ENCODE measurements at regions of chr4 and their contacts with region 1.

Region 1: GRCh38 chr4:781493-782216 is 44.3 kb downstream of the CPLX1 start:
- DNase-seq: peak; percentile 98 to 100 (median 99)
- ATAC-seq: peak; percentile 99
- H3K4me3 ChIP-seq: peak overlapping the region; percentile 100
- H3K27ac ChIP-seq: peak overlapping the region; percentile 99
- H3K4me1 ChIP-seq: peaks cover 12 to 49% of the 10 kb centered on the region in 2 experiments; a peak in 4 of 5 replicates
- H3K27me3 ChIP-seq: no peaks in the 10 kb centered on the region
- CTCF ChIP-seq: no peak
- EP300 ChIP-seq: no peak
- POLR2A ChIP-seq: peak; percentile 96
- RAD21 ChIP-seq: no peak; a peak in 1 of 4 replicates

Region 2: GRCh38 chr4:610411-611261 is 171.0 kb before region 1 on chr4:
- CTCF ChIA-PET with region 1: no interaction called
- POLR2A ChIA-PET with region 1: no interaction called
- in situ Hi-C with region 1: no loop called
- intact Hi-C with region 1: no loop called
- DNase-seq: no peak
- ATAC-seq: no peak
- H3K4me3 ChIP-seq: no peak overlapping the region
- H3K27ac ChIP-seq: no peak overlapping the region
- H3K4me1 ChIP-seq: peaks cover 0 to 3% of the 10 kb centered on the region in 2 experiments; a peak in 1 of 5 replicates
- H3K27me3 ChIP-seq: peaks cover 4 to 37% of the 10 kb centered on the region in 2 experiments; a peak in 3 of 5 replicates
- CTCF ChIP-seq: no peak
- EP300 ChIP-seq: no peak
- POLR2A ChIP-seq: no peak
- RAD21 ChIP-seq: no peak

Region 3: GRCh38 chr4:663438-664428 is 117.9 kb before region 1 on chr4:
- CTCF ChIA-PET with region 1: no interaction called
- POLR2A ChIA-PET with region 1: no interaction called
- in situ Hi-C with region 1: no loop called
- intact Hi-C with region 1: no loop called
- DNase-seq: no peak
- ATAC-seq: no peak
- H3K4me3 ChIP-seq: no peak overlapping the region
- H3K27ac ChIP-seq: no peak overlapping the region
- H3K4me1 ChIP-seq: peaks cover 0 to 42% of the 10 kb centered on the region in 2 experiments; a peak in 2 of 5 replicates
- H3K27me3 ChIP-seq: peaks cover 21 to 52% of the 10 kb centered on the region in 2 experiments; a peak in 3 of 5 replicates
- CTCF ChIP-seq: no peak
- EP300 ChIP-seq: no peak
- POLR2A ChIP-seq: no peak
- RAD21 ChIP-seq: no peak

Region 4: GRCh38 chr4:683982-684622 is 97.6 kb before region 1 on chr4:
- CTCF ChIA-PET with region 1: no interaction called
- POLR2A ChIA-PET with region 1: no interaction called
- in situ Hi-C with region 1: no loop called
- intact Hi-C with region 1: loop called (anchors 5 kb)
- DNase-seq: peak; percentile 69 to 83 (median 74)
- ATAC-seq: peak; percentile 68
- H3K4me3 ChIP-seq: no peak overlapping the region
- H3K27ac ChIP-seq: no peak overlapping the region
- H3K4me1 ChIP-seq: peaks cover 25 to 94% of the 10 kb centered on the region in 2 experiments
- H3K27me3 ChIP-seq: no peaks in the 10 kb centered on the region
- CTCF ChIP-seq: peak; percentile 82 to 85 (median 84)
- EP300 ChIP-seq: no peak
- POLR2A ChIP-seq: no peak
- RAD21 ChIP-seq: peak; percentile 8 to 66; a peak in 2 of 4 replicates

Region 5: GRCh38 chr4:762211-763190 is 19.2 kb before region 1 on chr4:
- CTCF ChIA-PET with region 1: no interaction called
- POLR2A ChIA-PET with region 1: interaction called, 17 read pairs
- in situ Hi-C with region 1: no loop called
- intact Hi-C with region 1: no loop called
- DNase-seq: no peak
- ATAC-seq: peak; percentile 19; the same call in 1 of the 3 replicates
- H3K4me3 ChIP-seq: no peak overlapping the region
- H3K27ac ChIP-seq: no peak overlapping the region
- H3K4me1 ChIP-seq: peaks cover 0 to 14% of the 10 kb centered on the region in 2 experiments; a peak in 2 of 5 replicates
- H3K27me3 ChIP-seq: no peaks in the 10 kb centered on the region
- CTCF ChIP-seq: peak in 2 of 3 experiments; percentile 14 to 24; a peak in 2 of 6 replicates
- EP300 ChIP-seq: no peak
- POLR2A ChIP-seq: 0 out of 2 replicates have a peak, but pooled peaks have one; percentile 10
- RAD21 ChIP-seq: no peak

Region 6: GRCh38 chr4:770022-770421 is 11.6 kb before region 1 on chr4:
- CTCF ChIA-PET with region 1: no interaction called
- POLR2A ChIA-PET with region 1: interaction called, 17 read pairs
- in situ Hi-C with region 1: no loop called
- intact Hi-C with region 1: no loop called
- DNase-seq: no peak
- ATAC-seq: no peak
- H3K4me3 ChIP-seq: no peak overlapping the region
- H3K27ac ChIP-seq: no peak overlapping the region
- H3K4me1 ChIP-seq: peaks cover 0 to 28% of the 10 kb centered on the region in 2 experiments; a peak in 3 of 5 replicates
- H3K27me3 ChIP-seq: no peaks in the 10 kb centered on the region
- CTCF ChIP-seq: no peak
- EP300 ChIP-seq: no peak
- POLR2A ChIP-seq: no peak
- RAD21 ChIP-seq: no peak

Region 7: DNA sequence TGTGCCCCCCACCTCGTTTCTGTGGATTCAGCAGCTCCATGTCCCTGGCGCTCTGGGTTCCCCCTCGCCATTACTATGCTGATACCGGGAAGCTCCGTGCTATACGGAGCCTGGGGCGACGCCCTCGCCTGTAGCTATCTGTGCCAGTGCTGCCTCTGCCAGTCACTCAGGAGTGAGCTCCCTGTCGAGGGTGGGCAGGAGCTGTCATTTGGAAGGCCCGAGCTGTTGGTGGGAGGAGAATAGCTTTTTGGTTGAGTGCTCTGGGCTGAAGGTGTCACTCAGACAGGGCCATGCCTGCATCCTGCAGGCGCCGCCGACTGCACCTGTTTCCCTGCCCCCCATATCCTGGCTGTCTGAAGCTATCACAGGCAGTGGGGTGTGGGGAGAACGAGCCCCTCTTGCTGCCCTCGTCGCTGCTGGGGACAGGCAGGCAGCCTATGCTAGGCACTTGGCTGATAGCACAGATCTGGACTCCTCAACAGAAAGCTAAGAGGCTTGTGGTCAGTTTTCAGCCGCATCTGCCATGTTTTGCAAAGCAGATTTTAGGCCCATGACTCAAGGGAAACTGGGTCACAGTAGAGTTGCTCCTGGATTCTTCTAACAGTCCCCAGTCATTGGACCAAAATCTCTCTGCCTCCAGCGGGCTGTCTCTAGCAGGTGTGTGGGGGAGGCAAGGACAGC is 12.4 kb after region 1 on chr4:
- CTCF ChIA-PET with region 1: no interaction called
- POLR2A ChIA-PET with region 1: interaction called, 15 read pairs
- in situ Hi-C with region 1: no loop called
- intact Hi-C with region 1: no loop called
- DNase-seq: no peak
- ATAC-seq: no peak
- H3K4me3 ChIP-seq: no peak overlapping the region
- H3K27ac ChIP-seq: no peak overlapping the region
- H3K4me1 ChIP-seq: peaks cover 0 to 61% of the 10 kb centered on the region in 2 experiments; a peak in 3 of 5 replicates
- H3K27me3 ChIP-seq: peaks cover 15 to 40% of the 10 kb centered on the region in 2 experiments
- CTCF ChIP-seq: no peak
- EP300 ChIP-seq: no peak
- POLR2A ChIP-seq: no peak
- RAD21 ChIP-seq: no peak

Region 8: GRCh38 chr4:915595-915994 is 133.9 kb after region 1 on chr4:
- CTCF ChIA-PET with region 1: no interaction called
- POLR2A ChIA-PET with region 1: no interaction called
- in situ Hi-C with region 1: no loop called
- intact Hi-C with region 1: no loop called
- DNase-seq: no peak
- ATAC-seq: no peak
- H3K4me3 ChIP-seq: no peak overlapping the region
- H3K27ac ChIP-seq: no peak overlapping the region
- H3K4me1 ChIP-seq: peaks cover 0 to 22% of the 10 kb centered on the region in 2 experiments; a peak in 2 of 5 replicates
- H3K27me3 ChIP-seq: no peaks in the 10 kb centered on the region
- CTCF ChIP-seq: no peak
- EP300 ChIP-seq: no peak
- POLR2A ChIP-seq: no peak
- RAD21 ChIP-seq: no peak

Region 9: DNA sequence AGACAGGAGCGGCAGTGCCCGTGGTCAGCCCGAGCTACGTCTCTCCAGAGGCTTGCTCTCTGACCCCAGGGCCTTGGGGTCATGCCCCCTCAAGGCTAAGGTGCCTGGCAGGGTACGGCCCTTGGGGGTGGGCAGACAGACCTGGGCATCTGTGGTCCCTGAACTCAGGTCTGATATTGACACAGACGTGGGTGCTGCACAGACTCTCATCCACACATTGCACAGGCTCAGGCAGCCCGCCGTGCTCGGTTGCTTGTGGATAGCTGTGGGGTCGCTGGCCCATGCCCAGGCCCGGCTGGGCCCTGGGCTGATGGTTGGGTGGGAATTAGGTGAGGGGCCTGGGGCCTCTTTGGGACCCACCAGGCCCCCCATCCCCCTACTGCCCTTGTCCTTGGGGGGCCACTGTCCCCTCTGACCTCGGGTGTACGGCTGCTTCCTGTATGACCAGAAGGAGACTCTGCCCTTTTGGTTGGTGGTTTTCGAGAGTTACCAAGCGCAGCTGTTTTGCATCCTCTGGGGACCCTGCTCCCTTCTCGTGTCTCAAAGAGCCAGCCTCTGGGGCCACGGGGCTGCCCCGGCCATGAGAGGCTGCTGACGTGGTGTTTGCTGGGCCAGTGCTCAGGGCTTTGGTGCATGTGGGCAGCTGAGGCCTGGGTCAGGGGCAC is 239.9 kb after region 1 on chr4:
- CTCF ChIA-PET with region 1: no interaction called
- POLR2A ChIA-PET with region 1: no interaction called
- in situ Hi-C with region 1: no loop called
- intact Hi-C with region 1: no loop called
- DNase-seq: peak in 1 of 4 experiments; percentile 11
- ATAC-seq: no peak
- H3K4me3 ChIP-seq: no peak overlapping the region
- H3K27ac ChIP-seq: no peak overlapping the region
- H3K4me1 ChIP-seq: peaks cover 0 to 63% of the 10 kb centered on the region in 2 experiments; a peak in 3 of 5 replicates
- H3K27me3 ChIP-seq: no peaks in the 10 kb centered on the region
- CTCF ChIP-seq: no peak
- EP300 ChIP-seq: no peak
- POLR2A ChIP-seq: no peak
- RAD21 ChIP-seq: no peak